ENCODE measurements at regions of chr1 and their contacts with region 1.

Region 1: DNA sequence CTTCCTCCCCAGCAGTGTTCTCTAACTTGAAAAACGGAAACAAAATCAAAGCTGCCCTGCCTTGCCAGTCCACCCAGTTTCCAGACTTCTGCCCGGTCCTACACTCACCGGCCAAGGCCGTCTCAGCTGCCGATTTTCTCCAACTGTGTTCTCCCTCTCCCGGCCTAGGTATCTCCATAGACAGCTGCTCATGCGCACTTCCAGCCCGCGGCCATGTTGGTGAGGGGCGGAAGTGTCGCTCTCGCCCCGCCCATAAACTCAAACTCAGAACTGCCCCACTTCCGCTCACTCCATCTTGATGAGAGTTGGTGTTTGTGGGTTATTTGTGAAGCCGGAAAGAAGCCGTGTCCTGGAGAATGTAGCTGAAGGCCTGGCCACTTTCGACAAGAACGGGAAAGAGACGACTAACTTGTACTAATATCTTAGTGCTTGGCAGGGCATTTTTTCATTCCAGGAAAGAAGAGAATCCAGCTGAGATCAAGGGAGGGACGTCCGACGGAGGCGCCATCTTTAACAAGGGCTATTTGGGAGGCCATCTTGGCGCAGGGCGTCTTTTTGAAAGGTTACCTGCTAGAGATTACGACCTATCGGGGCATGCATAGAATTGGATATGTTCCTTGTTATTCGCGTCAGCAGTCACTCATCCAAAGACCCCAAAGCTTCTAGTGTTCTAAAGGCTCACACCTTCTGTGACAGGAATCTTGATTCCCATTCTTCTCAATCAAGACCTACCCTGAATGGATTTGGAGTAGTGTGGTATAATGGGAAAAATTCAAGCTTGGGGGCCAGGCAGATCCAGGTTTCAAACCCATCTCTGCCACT is at the start of gene USF1:
- DNase-seq: peak; percentile 99
- H3K4me3 Mint-ChIP-seq: peak within 1 kb of the TSS; percentile 93
- H3K27ac Mint-ChIP-seq: peak within 1 kb of the TSS; percentile 99
- H3K4me1 Mint-ChIP-seq: peaks cover 18% of the 10 kb centered on the region
- H3K27me3 Mint-ChIP-seq: no peaks in the 10 kb centered on the region
- CTCF ChIP-seq: no peak
- total RNA-seq, gene USF1: 48.8 and 52.8 TPM in 2 replicates

Region 2: GRCh38 chr1:160997323-160998038 is 48.5 kb before region 1 on chr1:
- CTCF ChIA-PET with region 1: interaction called, 11 read pairs
- POLR2A ChIA-PET with region 1: interaction called, 18 read pairs
- intact Hi-C with region 1: loop called (anchors 1 kb)
- DNase-seq: peak; percentile 74
- H3K4me3 Mint-ChIP-seq: no peak overlapping the region
- H3K27ac Mint-ChIP-seq: no peak overlapping the region
- H3K4me1 Mint-ChIP-seq: peaks cover 35% of the 10 kb centered on the region
- H3K27me3 Mint-ChIP-seq: no peaks in the 10 kb centered on the region
- CTCF ChIP-seq: peak; percentile 44

Region 3: DNA sequence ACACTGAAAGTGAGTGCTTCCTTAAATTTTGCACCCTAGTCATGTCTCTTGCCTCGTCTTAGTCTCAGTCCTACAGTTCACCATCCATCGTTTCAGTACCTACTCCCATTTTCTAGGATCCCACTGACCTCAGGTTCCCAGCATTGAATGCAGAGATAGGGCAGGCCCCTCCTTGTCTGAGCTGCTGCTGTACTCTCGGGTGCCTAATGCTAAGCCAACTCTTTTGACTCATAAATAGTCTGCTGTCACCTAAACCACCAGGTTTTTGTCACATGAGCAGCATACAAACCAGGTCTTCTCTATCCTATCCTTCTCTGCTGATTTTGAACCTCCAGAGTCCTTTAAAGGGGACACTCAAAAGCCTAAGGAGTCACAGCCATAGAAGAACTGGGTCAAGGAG is 20.7 kb after region 1 on chr1:
- CTCF ChIA-PET with region 1: interaction called, 53 read pairs
- POLR2A ChIA-PET with region 1: interaction called, 122 read pairs
- intact Hi-C with region 1: no loop called
- DNase-seq: no peak
- H3K4me3 Mint-ChIP-seq: no peak overlapping the region
- H3K27ac Mint-ChIP-seq: no peak overlapping the region
- H3K4me1 Mint-ChIP-seq: peaks cover 9% of the 10 kb centered on the region
- H3K27me3 Mint-ChIP-seq: no peaks in the 10 kb centered on the region
- CTCF ChIP-seq: no peak

Region 4: DNA sequence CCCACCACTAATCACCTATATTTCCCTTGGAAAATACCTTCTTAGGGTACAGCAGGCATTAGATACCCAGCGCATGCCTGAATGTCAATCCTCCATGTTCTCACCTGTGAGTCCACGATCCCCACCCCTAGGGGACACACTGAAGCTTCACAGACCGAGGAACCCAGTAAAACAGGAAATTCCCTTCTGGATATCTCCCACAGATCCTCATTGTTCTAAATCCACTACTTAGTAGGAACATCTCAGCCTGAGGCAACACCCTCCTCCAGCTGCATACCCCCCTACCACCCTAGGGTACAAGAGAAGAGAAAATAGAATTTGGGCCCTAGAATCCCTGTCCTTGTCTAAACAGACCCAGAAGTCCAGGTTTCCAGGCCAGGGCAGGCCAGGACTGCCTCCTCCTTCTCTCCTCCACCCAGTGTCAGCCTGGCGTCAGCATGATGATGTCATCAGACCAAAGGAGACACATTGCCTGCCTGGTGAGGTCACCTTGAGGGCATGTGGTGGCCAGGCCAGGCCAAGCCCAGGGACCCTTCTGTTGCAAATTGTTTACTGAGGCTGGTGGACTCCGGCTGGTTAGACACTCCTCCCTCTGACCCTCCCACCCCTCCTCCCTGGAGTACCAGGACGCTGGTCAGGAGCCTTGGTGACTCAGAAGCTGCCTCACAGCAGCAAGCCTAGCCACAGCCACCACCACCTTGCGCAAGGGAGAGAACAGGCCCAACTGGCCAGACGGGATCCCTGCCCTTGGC is 37.2 kb after region 1 on chr1:
- CTCF ChIA-PET with region 1: interaction called, 8 read pairs
- POLR2A ChIA-PET with region 1: interaction called, 14 read pairs
- intact Hi-C with region 1: no loop called
- DNase-seq: peak; percentile 98
- H3K4me3 Mint-ChIP-seq: peak overlapping the region; percentile 4
- H3K27ac Mint-ChIP-seq: peak overlapping the region; percentile 90
- H3K4me1 Mint-ChIP-seq: peaks cover 73% of the 10 kb centered on the region
- H3K27me3 Mint-ChIP-seq: no peaks in the 10 kb centered on the region
- CTCF ChIP-seq: no peak

Region 5: DNA sequence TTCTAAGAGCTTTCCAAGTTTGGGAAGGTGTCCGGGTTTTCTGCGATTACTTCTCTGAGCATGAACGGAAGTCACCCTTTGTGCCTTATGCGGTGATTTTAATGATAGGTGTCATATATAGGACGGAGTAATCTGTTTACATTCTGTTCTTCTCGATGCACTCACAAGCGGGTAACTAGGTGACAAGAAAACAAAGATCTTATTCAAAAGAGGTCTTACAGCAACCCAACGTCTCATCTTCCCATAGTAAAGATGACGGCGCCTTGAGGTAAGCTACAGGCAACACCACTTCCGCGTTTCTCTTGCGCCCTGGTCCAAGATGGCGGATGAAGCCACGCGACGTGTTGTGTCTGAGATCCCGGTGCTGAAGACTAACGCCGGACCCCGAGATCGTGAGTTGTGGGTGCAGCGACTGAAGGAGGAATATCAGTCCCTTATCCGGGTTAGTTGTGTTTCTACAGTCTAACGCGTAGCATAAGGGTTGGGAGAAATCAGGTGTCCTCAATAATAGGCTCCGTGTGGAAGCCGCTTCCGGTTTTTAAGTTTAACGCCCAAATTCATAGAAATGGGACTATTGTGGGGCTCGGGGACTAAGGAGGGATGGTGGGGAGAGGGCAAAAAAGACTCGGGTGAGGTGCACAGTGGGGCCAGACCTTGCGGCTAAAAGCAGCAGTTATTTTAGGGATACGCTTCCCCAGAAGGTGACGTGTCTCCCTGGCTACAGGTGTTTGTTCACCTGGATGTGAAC is 107.9 kb after region 1 on chr1 and contains the start of gene UFC1:
- CTCF ChIA-PET with region 1: no interaction called
- POLR2A ChIA-PET with region 1: interaction called, 10 read pairs
- intact Hi-C with region 1: no loop called
- DNase-seq: peak; percentile 94
- H3K4me3 Mint-ChIP-seq: peak within 1 kb of the TSS; percentile 92
- H3K27ac Mint-ChIP-seq: peak within 1 kb of the TSS; percentile 100
- H3K4me1 Mint-ChIP-seq: peaks cover 18% of the 10 kb centered on the region
- H3K27me3 Mint-ChIP-seq: no peaks in the 10 kb centered on the region
- CTCF ChIP-seq: no peak
- total RNA-seq, gene UFC1: 123 and 125 TPM in 2 replicates